ENCODE measurements at regions of chr20 and their contacts with region 1.

Region 1: GRCh38 chr20:5788385-5788895 is 38.2 kb downstream of the SHLD1 start:
- H3K4me3 ChIP-seq: no peak overlapping the region
- H3K27ac ChIP-seq: no peak overlapping the region
- H3K4me1 ChIP-seq: peaks cover 13% of the 10 kb centered on the region
- CTCF ChIP-seq: peak; percentile 68; the same call in 1 of the 2 replicates

Region 2: GRCh38 chr20:5529331-5530148 is 258.9 kb before region 1 on chr20:
- CTCF ChIA-PET with region 1: interaction called, 103 read pairs
- POLR2A ChIA-PET with region 1: no interaction called
- H3K4me3 ChIP-seq: no peak overlapping the region
- H3K27ac ChIP-seq: no peak overlapping the region
- H3K4me1 ChIP-seq: no peaks in the 10 kb centered on the region
- CTCF ChIP-seq: peak; percentile 63; the same call in 1 of the 2 replicates

Region 3: DNA sequence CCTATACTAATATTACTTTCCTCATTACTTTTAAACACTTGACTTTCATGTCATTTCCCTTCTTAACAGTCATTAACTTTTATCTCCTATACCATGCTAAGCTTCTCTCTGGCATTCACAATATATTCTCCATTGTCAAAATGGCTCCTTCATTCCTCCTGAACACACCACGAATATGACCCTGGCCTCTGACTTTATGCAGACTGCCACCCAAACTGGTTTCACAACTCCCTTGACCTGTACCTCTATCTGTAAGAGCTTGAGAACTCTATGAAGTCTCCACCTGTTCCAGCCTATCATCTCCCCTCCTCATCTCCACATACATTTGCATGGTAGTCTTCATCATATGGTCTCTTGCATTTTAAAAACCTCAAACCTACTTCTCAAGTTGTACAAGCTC is 245.1 kb before region 1 on chr20:
- CTCF ChIA-PET with region 1: interaction called, 10 read pairs
- POLR2A ChIA-PET with region 1: no interaction called
- H3K4me3 ChIP-seq: no peak overlapping the region
- H3K27ac ChIP-seq: no peak overlapping the region
- H3K4me1 ChIP-seq: no peaks in the 10 kb centered on the region
- CTCF ChIP-seq: no peak

Region 4: GRCh38 chr20:5557123-5557522 is 231.3 kb before region 1 on chr20:
- CTCF ChIA-PET with region 1: interaction called, 74 read pairs
- POLR2A ChIA-PET with region 1: interaction called, 3 read pairs
- H3K4me3 ChIP-seq: no peak overlapping the region
- H3K27ac ChIP-seq: no peak overlapping the region
- H3K4me1 ChIP-seq: no peaks in the 10 kb centered on the region
- CTCF ChIP-seq: 0 out of 2 replicates have a peak, but pooled peaks have one; percentile 21

Region 5: GRCh38 chr20:5749952-5750779 is 38.3 kb before region 1 on chr20 and contains the start of gene SHLD1:
- CTCF ChIA-PET with region 1: interaction called, 12 read pairs
- POLR2A ChIA-PET with region 1: no interaction called
- H3K4me3 ChIP-seq: peak within 1 kb of the TSS; percentile 46
- H3K27ac ChIP-seq: peak within 1 kb of the TSS; percentile 11
- H3K4me1 ChIP-seq: 0 out of 2 replicates have a peak, but pooled peaks cover 2% of the 10 kb centered on the region
- CTCF ChIP-seq: no peak

Region 6: DNA sequence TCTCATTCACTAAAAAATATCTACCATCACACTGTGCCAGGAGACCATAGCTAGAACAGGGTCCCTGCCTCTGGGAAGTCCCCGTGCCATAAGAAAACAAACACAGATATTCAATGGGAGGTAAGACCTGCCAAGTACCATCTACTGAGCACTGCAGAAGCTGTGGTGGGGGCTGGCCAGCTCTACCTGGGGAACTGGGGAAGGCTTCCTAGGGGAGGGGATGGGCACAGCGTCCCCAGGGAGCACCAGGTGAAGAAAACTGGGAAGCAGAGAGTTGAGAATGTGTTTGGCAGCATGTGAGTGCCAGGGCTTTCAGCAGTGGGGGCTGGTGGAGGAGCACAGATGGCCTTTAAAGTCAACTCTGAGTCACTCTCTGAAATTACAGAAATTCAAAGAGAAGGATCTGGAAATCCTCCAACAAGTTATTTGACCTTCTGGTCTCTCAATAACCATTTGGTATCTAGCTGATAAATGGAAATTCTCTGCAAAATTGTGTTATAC is 46.9 kb after region 1 on chr20:
- CTCF ChIA-PET with region 1: interaction called, 10 read pairs
- POLR2A ChIA-PET with region 1: no interaction called
- H3K4me3 ChIP-seq: no peak overlapping the region
- H3K27ac ChIP-seq: no peak overlapping the region
- H3K4me1 ChIP-seq: 0 out of 2 replicates have a peak, but pooled peaks cover 5% of the 10 kb centered on the region
- CTCF ChIP-seq: no peak

Measured in HEK293 (cell line).